ENCODE measurements at regions of chr6 and their contacts with region 1.

Region 1: GRCh38 chr6:158026054-158026900 is 44.6 kb downstream of the SYNJ2 start:
- DNase-seq: peak; percentile 77
- ATAC-seq: peak; percentile 71
- H3K4me3 Mint-ChIP-seq: peak overlapping the region; percentile 85
- H3K27ac Mint-ChIP-seq: peak overlapping the region; percentile 98
- H3K4me1 Mint-ChIP-seq: peaks cover 39% of the 10 kb centered on the region
- H3K27me3 Mint-ChIP-seq: no peaks in the 10 kb centered on the region
- CTCF ChIP-seq: peak; percentile 63

Region 2: GRCh38 chr6:157823001-157823527 is 203.2 kb before region 1 on chr6 and contains the start of gene SNX9:
- CTCF ChIA-PET with region 1: no interaction called
- POLR2A ChIA-PET with region 1: no interaction called
- intact Hi-C with region 1: loop called (anchors 2 kb)
- DNase-seq: peak; percentile 70
- ATAC-seq: peak; percentile 65
- H3K4me3 Mint-ChIP-seq: peak within 1 kb of the TSS; percentile 95
- H3K27ac Mint-ChIP-seq: peak within 1 kb of the TSS; percentile 98
- H3K4me1 Mint-ChIP-seq: peaks cover 47% of the 10 kb centered on the region
- H3K27me3 Mint-ChIP-seq: no peaks in the 10 kb centered on the region
- CTCF ChIP-seq: no peak
- total RNA-seq, gene SNX9: 38.8 and 40.0 TPM in 2 replicates

Region 3: GRCh38 chr6:157981395-157982296 is 44.6 kb before region 1 on chr6 and contains the start of gene SYNJ2:
- CTCF ChIA-PET with region 1: interaction called, 28 read pairs
- POLR2A ChIA-PET with region 1: interaction called, 32 read pairs
- intact Hi-C with region 1: loop called (anchors 1 kb)
- DNase-seq: peak; percentile 78
- ATAC-seq: peak; percentile 86
- H3K4me3 Mint-ChIP-seq: peak within 1 kb of the TSS; percentile 89
- H3K27ac Mint-ChIP-seq: peak within 1 kb of the TSS; percentile 77
- H3K4me1 Mint-ChIP-seq: peaks cover 43% of the 10 kb centered on the region
- H3K27me3 Mint-ChIP-seq: no peaks in the 10 kb centered on the region
- CTCF ChIP-seq: no peak
- total RNA-seq, gene SYNJ2: 20.7 and 25.0 TPM in 2 replicates

Region 4: DNA sequence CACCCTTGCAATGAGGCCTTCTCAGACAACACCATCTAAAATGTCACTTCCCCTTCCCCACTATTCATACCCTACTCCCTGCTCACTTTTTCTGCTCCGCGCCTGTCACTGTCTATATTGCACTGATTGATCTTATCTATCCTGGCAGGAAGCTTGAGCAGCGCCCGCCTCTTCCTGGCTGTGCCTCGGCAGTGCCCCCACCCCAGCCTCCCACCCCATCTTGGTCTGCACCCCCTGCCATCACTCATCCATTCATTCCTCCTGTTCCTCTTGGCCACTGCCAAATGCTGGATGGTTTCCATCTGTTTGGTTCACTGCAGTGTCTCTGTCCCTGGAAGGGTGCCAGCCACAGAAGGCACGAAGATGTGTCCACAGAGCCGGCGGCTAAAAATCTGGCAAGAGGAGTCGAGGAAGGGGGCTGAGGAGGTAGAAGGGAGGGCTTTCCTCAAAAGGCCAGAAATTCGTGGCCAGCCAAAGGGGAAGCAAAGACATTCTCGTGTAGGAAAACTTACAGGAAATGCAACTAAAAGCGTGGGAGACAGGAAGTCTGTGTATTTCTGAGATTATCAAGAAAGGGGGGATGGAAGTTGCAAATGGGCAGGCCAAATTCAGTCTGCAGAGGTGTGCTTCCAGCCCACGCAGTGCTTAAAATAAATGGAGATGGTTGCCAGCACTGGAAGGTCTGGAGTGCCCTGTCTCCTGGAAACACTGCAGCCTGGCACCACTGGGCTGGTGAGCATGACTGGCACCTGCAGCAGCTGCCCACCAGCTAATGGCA is 17.0 kb before region 1 on chr6:
- CTCF ChIA-PET with region 1: no interaction called
- POLR2A ChIA-PET with region 1: interaction called, 12 read pairs
- intact Hi-C with region 1: loop called (anchors 2 kb)
- DNase-seq: no peak
- ATAC-seq: no peak
- H3K4me3 Mint-ChIP-seq: no peak overlapping the region
- H3K27ac Mint-ChIP-seq: peak overlapping the region; percentile 46
- H3K4me1 Mint-ChIP-seq: peaks cover 50% of the 10 kb centered on the region
- H3K27me3 Mint-ChIP-seq: no peaks in the 10 kb centered on the region
- CTCF ChIP-seq: no peak

Region 5: DNA sequence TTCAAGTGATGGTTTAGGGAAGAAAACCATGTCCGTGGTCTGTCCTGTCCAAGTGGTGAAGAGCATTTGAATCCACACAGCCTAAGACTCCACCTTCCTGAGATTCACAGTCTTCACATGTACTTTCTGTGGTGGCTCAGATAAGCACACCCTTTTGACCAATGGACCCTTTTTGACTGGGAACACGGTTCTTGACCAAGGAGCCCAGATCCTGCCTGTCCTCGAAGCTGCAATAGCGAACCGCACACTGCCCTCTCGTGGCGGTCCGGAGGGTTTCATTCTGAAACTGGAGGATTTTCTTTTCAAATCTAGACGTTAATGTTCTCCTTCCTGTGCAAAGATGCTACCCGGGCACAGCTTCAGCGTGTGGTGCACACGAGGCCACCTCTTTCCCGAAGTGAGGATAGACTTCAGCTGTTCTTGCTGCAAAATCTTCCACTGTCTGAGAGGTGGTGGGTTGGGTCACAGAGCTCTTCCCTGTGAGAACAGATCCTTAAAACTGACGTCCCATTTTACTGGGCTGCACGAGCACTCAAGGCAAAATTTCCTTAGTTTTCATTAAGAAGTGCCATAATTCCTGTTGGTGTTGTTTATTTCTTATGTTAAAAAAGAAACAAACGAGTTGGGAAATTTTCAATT is 45.9 kb after region 1 on chr6:
- CTCF ChIA-PET with region 1: interaction called, 27 read pairs
- POLR2A ChIA-PET with region 1: interaction called, 7 read pairs
- intact Hi-C with region 1: loop called (anchors 1 kb)
- DNase-seq: peak; percentile 57
- ATAC-seq: no peak
- H3K4me3 Mint-ChIP-seq: no peak overlapping the region
- H3K27ac Mint-ChIP-seq: peak overlapping the region; percentile 42
- H3K4me1 Mint-ChIP-seq: peaks cover 3% of the 10 kb centered on the region
- H3K27me3 Mint-ChIP-seq: no peaks in the 10 kb centered on the region
- CTCF ChIP-seq: peak; percentile 74